H1 (cell line): ENCODE measurements at regions of chr16 and their contacts with region 1.

Region 1: GRCh38 chr16:70454222-70455034 is at the start of gene FCSK:
- DNase-seq: peak in 1 of 2 experiments; percentile 89
- H3K4me3 ChIP-seq: peak within 1 kb of the TSS; percentile 44 to 83 (median 78)
- H3K27ac ChIP-seq: peak within 1 kb of the TSS; percentile 100
- H3K4me1 ChIP-seq: peaks cover 0 to 2% (median 0%) of the 10 kb centered on the region in 4 experiments; a peak in 1 of 7 replicates
- H3K27me3 ChIP-seq: no peaks in the 10 kb centered on the region
- CTCF ChIP-seq: peak; percentile 46 to 62 (median 47); a peak in 3 of 4 replicates
- EP300 ChIP-seq: no peak
- POLR2A ChIP-seq: peak in 1 of 2 experiments; percentile 57; a peak in 2 of 3 replicates
- RAD21 ChIP-seq: peak in 1 of 2 experiments; percentile 36; a peak in 2 of 4 replicates
- total RNA-seq, gene FCSK: 3.4 and 4.6 TPM in 2 replicates

Region 2: DNA sequence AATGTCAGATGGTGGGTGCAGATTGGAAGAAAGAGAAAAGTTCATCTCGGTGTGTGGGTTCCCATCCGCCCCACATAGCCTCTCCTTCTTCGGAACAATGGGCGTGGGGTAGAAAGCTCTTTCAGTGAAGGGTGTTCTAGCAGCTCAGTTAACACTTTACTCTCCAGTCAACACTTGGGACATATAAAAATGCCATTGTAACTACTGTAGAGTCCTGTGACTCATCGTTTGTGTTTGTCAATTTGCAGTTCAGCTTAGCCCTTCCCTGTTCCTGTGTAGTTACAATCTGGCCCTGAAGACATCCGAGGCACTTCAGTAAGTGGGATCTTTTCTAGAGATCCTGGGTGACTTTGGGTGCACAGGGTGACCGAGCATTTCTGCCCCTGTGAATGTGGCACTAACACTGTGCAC is 292.4 kb before region 1 on chr16:
- CTCF ChIA-PET with region 1: no interaction called
- POLR2A ChIA-PET with region 1: no interaction called
- DNase-seq: no peak
- H3K4me3 ChIP-seq: no peak overlapping the region
- H3K27ac ChIP-seq: no peak overlapping the region
- H3K4me1 ChIP-seq: no peaks in the 10 kb centered on the region
- H3K27me3 ChIP-seq: no peaks in the 10 kb centered on the region
- CTCF ChIP-seq: no peak
- EP300 ChIP-seq: no peak
- POLR2A ChIP-seq: no peak
- RAD21 ChIP-seq: no peak

Region 3: DNA sequence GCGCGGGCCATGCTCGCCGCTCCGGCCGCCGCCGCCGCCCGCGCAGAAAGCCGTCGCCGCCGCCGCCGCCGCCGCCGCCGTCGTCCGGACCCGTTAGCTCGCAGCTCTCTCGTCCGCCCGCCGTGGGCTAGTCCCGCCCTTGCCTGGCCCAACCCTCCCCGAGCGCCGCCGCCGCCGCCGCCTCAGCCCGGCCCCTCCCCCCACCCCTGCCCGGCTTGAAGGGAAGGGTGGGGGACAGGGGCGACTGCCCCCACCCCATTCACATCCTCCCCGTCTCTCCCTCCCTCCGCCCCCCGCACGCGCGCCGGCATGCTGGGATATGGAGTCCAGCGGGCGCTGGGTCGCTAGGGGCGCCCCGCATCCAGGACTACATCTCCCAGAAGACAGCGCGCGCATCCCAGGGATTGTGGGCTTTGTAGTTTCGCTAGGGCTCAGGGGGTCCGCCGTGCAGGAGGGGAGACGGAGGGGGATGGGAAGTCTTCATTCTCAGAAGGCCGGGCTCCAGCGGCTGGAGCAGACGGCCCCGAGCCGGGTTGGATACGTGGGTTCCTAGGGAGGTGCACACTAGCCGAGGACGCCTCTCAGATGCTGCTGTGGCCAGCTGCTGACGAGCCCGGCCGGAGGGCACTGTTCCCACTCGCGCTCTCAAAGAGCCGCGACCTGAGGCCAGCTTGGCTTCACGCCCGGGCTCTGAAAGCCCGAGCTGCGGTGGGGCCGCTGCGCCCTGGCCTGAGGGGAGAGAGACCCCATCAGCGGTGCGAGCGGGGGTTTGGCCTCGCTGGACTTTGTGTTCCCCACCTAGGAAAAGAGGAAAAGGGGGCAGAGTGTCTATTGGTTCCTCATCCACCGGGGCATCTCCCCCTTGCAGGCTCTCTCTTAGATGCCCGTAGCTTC is 15.2 kb before region 1 on chr16 and contains the start of gene ST3GAL2:
- CTCF ChIA-PET with region 1: interaction called, 37 read pairs
- POLR2A ChIA-PET with region 1: interaction called, 22 read pairs
- DNase-seq: peak; percentile 87 to 95
- H3K4me3 ChIP-seq: peak within 1 kb of the TSS; percentile 76 to 92 (median 80)
- H3K27ac ChIP-seq: peak within 1 kb of the TSS; percentile 56; the same call in 1 of the 2 replicates
- H3K4me1 ChIP-seq: peaks cover 5 to 23% (median 15%) of the 10 kb centered on the region in 4 experiments
- H3K27me3 ChIP-seq: no peaks in the 10 kb centered on the region
- CTCF ChIP-seq: no peak
- EP300 ChIP-seq: peak in 1 of 2 experiments; percentile 53; a peak in 1 of 3 replicates
- POLR2A ChIP-seq: peak; percentile 60 to 87
- RAD21 ChIP-seq: no peak
- total RNA-seq, gene ST3GAL2: 39.3 and 39.7 TPM in 2 replicates